ENCODE measurements at regions of chr17 and their contacts with region 1.

Region 1: DNA sequence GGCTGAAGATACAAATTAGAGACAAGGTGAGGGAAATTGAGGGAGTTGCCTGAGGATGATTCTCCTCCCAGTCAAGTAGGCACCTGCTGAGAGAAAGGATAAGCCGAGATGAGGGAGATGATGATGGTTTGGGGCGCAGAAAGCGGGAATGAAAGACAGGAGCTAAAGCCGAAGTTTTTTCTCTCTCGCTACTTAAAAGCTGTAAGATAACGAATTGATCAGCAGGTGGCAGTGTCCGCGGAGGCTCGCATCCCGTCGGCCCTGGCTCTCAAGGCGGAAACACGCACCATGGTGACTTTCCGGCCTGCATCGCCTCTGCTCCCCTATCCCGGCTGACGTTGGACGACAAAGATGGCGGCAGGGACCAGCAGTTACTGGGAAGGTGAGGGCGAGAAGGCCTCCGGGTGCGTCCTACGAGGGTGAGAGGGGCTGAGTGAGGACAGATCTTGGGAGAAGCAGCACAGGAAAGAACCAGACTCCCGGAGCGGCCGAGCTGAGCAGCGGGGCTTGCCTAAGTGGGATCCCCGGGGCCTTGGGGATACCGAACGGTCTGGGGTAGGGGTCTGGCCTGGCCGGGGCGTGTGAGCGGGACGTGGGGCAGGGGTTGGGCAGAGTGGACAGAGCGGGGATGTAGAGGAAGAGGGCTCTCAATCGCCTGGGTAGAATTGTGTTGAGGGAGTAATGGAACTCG is at the start of gene GOSR1:
- DNase-seq: peak; percentile 97
- H3K4me3 ChIP-seq: peak within 1 kb of the TSS; percentile 57 to 100 (median 90)
- H3K27ac ChIP-seq: peak within 1 kb of the TSS; percentile 85
- H3K4me1 ChIP-seq: peaks cover 12% of the 10 kb centered on the region
- H3K27me3 ChIP-seq: peaks cover 0 to 4% of the 10 kb centered on the region in 2 experiments
- CTCF ChIP-seq: peak; percentile 78 to 93
- POLR2A ChIP-seq: peak; percentile 88
- total RNA-seq, gene GOSR1: 41.0 and 43.8 TPM in 2 replicates

Region 2: GRCh38 chr17:30378824-30379302 is 98.4 kb before region 1 on chr17 and contains the start of gene CPD:
- CTCF ChIA-PET with region 1: interaction called, 7 read pairs
- POLR2A ChIA-PET with region 1: no interaction called
- dilution Hi-C with region 1: no loop called
- intact Hi-C with region 1: loop called (anchors 5 kb)
- DNase-seq: peak; percentile 95
- H3K4me3 ChIP-seq: peak within 1 kb of the TSS; percentile 71 to 92 (median 86)
- H3K27ac ChIP-seq: peak within 1 kb of the TSS; percentile 32
- H3K4me1 ChIP-seq: peaks cover 23% of the 10 kb centered on the region
- H3K27me3 ChIP-seq: peaks cover 2 to 3% of the 10 kb centered on the region in 2 experiments
- CTCF ChIP-seq: no peak
- POLR2A ChIP-seq: peak; percentile 97
- total RNA-seq, gene CPD: 63.6 and 68.0 TPM in 2 replicates

Region 3: GRCh38 chr17:30433514-30433913 is 43.7 kb before region 1 on chr17:
- CTCF ChIA-PET with region 1: interaction called, 10 read pairs
- POLR2A ChIA-PET with region 1: no interaction called
- dilution Hi-C with region 1: no loop called
- intact Hi-C with region 1: no loop called
- DNase-seq: peak; percentile 98
- H3K4me3 ChIP-seq: no peak overlapping the region
- H3K27ac ChIP-seq: peak overlapping the region; percentile 4
- H3K4me1 ChIP-seq: peaks cover 13% of the 10 kb centered on the region
- H3K27me3 ChIP-seq: no peaks in the 10 kb centered on the region
- CTCF ChIP-seq: no peak
- POLR2A ChIP-seq: no peak

Region 4: DNA sequence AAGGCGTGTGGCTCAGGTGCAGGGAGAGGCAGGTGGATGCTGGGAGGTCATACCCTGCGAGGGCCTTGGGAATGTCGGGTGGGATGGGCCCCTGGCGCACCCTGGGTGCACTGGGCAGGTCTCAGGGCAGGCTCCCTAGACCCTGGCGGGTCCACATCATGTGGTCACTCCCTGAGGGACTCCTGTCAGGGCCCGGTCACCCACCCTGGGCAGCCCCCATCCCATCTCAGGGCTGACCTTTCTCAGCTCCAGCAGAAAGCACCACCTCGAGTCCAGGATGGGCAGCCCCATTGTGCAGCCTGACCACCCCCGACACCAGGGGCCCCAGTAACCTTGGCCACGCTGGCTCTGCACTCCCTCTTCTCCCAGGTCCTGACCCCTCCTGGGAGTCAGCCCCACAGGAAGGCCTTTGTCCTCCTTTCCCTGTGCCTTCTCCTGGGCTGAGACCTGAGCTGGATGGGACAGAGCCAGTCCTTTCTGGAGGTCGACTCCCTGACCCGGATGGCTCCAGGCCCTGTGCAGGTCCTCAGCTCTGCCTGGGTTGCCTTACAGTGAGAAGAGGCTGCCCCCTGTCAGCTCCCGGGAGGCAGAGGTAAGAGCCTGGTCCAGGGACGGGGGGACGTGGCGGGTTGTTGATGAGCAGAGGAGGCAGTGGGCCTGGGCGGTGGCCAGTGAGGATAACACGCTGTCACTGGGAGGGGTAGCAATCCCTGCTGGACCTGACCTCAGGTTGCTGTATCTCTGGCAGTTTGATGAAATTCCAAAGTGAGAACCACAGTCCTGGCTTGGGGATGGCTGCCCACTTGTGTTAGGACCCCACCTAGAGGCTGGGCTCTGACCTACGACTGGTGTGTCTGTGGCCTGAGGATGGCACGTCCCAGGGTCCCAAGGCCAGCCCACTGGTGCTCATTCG is 77.9 kb after region 1 on chr17:
- CTCF ChIA-PET with region 1: interaction called, 16 read pairs
- POLR2A ChIA-PET with region 1: no interaction called
- dilution Hi-C with region 1: no loop called
- intact Hi-C with region 1: loop called (anchors 1 kb)
- DNase-seq: peak; percentile 34
- H3K4me3 ChIP-seq: no peak overlapping the region
- H3K27ac ChIP-seq: no peak overlapping the region
- H3K4me1 ChIP-seq: no peaks in the 10 kb centered on the region
- H3K27me3 ChIP-seq: no peaks in the 10 kb centered on the region
- CTCF ChIP-seq: peak; percentile 13 to 51
- POLR2A ChIP-seq: no peak

Region 5: GRCh38 chr17:30600049-30600829 is 123.0 kb after region 1 on chr17:
- CTCF ChIA-PET with region 1: interaction called, 11 read pairs
- POLR2A ChIA-PET with region 1: no interaction called
- dilution Hi-C with region 1: no loop called
- intact Hi-C with region 1: loop called (anchors 2 kb)
- DNase-seq: peak; percentile 85
- H3K4me3 ChIP-seq: peak overlapping the region; percentile 40 to 99 (median 71)
- H3K27ac ChIP-seq: peak overlapping the region; percentile 50
- H3K4me1 ChIP-seq: peaks cover 7% of the 10 kb centered on the region
- H3K27me3 ChIP-seq: no peaks in the 10 kb centered on the region
- CTCF ChIP-seq: peak; percentile 53 to 77
- POLR2A ChIP-seq: no peak

Region 6: DNA sequence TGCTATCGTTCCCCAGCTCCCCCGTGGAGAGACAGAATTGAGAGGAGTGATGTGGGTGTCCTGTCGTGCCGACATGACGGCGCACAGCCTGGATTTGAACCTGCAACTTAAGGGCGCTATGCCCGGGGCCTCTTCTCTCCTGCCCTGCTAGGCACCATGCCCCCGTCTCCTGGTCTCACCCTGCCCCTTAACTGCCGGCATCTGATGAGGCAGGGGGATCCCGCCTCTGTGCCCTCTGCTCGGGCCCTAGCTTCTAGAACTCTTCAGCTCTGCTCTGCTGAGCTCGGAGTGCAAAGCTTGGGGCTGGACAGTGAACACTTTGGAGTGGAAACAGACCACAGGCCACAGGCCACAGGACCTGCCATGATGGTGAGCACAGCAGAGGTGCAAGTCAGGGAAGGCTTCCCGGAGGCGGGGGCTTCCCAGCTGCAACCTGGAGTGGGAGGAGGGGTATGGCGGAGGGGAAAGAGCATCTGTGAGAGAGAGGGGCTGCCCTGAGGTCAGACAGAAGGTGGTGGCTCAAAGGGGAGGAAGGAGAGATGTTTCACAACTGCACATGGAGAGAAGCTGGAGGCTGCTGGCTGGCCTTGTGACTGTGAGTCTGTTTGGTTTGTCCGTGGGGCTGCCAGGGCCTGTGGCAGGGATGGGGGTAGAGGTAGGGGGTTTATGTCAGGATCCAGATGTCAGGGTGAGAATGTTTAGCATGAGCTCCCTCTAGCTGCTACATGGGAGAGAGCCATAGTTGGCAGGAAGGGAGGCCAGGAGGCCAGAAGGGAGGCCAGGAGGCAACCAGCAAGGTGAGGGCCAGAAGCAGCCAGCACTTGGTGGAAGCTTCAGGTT is 239.5 kb after region 1 on chr17:
- CTCF ChIA-PET with region 1: interaction called, 13 read pairs
- POLR2A ChIA-PET with region 1: no interaction called
- dilution Hi-C with region 1: no loop called
- intact Hi-C with region 1: loop called (anchors 2 kb)
- DNase-seq: no peak
- H3K4me3 ChIP-seq: no peak overlapping the region
- H3K27ac ChIP-seq: no peak overlapping the region
- H3K4me1 ChIP-seq: no peaks in the 10 kb centered on the region
- H3K27me3 ChIP-seq: no peaks in the 10 kb centered on the region
- CTCF ChIP-seq: no peak
- POLR2A ChIP-seq: no peak